Caco-2 (cell line): ENCODE measurements at regions of chr6 and their contacts with region 1.

Region 1: GRCh38 chr6:47631269-47631772 is 67.1 kb upstream of the ADGRF4 start:
- DNase-seq: peak in 1 of 2 experiments; percentile 53
- H3K4me3 ChIP-seq: no peak overlapping the region
- H3K4me3 Mint-ChIP-seq: no peak overlapping the region
- H3K27ac Mint-ChIP-seq: peak overlapping the region; percentile 84
- H3K4me1 ChIP-seq: peaks cover 42% of the 10 kb centered on the region
- H3K4me1 Mint-ChIP-seq: peaks cover 27% of the 10 kb centered on the region
- H3K27me3 ChIP-seq: no peaks in the 10 kb centered on the region
- H3K27me3 Mint-ChIP-seq: no peaks in the 10 kb centered on the region
- CTCF ChIP-seq: peak; percentile 46 to 68

Region 2: GRCh38 chr6:47646567-47647088 is 15.3 kb after region 1 on chr6:
- CTCF ChIA-PET with region 1: no interaction called
- POLR2A ChIA-PET with region 1: no interaction called
- intact Hi-C with region 1: loop called (anchors 2 kb)
- DNase-seq: no peak
- H3K4me3 ChIP-seq: no peak overlapping the region
- H3K4me3 Mint-ChIP-seq: no peak overlapping the region
- H3K27ac Mint-ChIP-seq: no peak overlapping the region
- H3K4me1 ChIP-seq: peaks cover 26% of the 10 kb centered on the region
- H3K4me1 Mint-ChIP-seq: peaks cover 15% of the 10 kb centered on the region
- H3K27me3 ChIP-seq: no peaks in the 10 kb centered on the region
- H3K27me3 Mint-ChIP-seq: no peaks in the 10 kb centered on the region
- CTCF ChIP-seq: peak in 1 of 2 experiments; percentile 8

Region 3: GRCh38 chr6:47680051-47680450 is 48.7 kb after region 1 on chr6:
- CTCF ChIA-PET with region 1: no interaction called
- POLR2A ChIA-PET with region 1: no interaction called
- intact Hi-C with region 1: no loop called
- DNase-seq: peak in 1 of 2 experiments; percentile 23
- H3K4me3 ChIP-seq: no peak overlapping the region
- H3K4me3 Mint-ChIP-seq: no peak overlapping the region
- H3K27ac Mint-ChIP-seq: no peak overlapping the region
- H3K4me1 ChIP-seq: no peaks in the 10 kb centered on the region
- H3K4me1 Mint-ChIP-seq: peaks cover 7% of the 10 kb centered on the region
- H3K27me3 ChIP-seq: no peaks in the 10 kb centered on the region
- H3K27me3 Mint-ChIP-seq: no peaks in the 10 kb centered on the region
- CTCF ChIP-seq: no peak

Region 4: GRCh38 chr6:47690209-47690608 is 58.9 kb after region 1 on chr6:
- CTCF ChIA-PET with region 1: no interaction called
- POLR2A ChIA-PET with region 1: no interaction called
- intact Hi-C with region 1: loop called (anchors 1 kb)
- DNase-seq: peak in 1 of 2 experiments; percentile 19
- H3K4me3 ChIP-seq: no peak overlapping the region
- H3K4me3 Mint-ChIP-seq: no peak overlapping the region
- H3K27ac Mint-ChIP-seq: no peak overlapping the region
- H3K4me1 ChIP-seq: no peaks in the 10 kb centered on the region
- H3K4me1 Mint-ChIP-seq: no peaks in the 10 kb centered on the region
- H3K27me3 ChIP-seq: no peaks in the 10 kb centered on the region
- H3K27me3 Mint-ChIP-seq: no peaks in the 10 kb centered on the region
- CTCF ChIP-seq: no peak

Region 5: DNA sequence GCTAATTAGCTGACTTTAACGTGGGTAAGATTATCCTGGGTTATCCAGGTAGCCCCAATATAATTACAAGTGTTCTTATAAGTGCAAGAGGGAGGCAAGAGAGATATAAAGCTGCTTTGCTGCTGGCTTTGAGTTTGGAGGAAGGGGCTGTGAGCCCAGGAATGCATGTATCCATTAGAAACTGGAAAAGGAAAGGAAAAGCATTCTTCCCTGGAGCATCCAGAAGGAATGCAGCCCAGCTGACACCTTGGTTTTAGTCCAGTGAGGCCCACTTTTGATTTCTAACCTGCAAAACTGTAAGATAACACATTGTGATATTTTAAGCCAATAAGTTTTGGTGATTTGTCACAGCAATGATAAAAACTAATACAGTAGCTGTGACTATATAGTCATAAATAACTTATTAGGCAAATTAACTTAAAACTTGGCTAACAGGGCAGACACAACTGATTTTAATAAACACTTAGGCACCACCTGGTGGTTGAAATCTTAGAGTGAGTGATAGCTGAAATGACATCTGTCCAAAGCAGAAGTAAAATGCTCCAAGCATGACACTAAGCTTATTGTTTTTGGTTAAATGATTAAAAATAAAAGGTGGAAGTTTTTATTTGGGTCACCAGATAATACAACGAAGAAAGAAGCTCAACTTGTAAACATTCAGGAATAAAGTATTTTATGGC is 102.7 kb after region 1 on chr6:
- CTCF ChIA-PET with region 1: interaction called, 47 read pairs
- POLR2A ChIA-PET with region 1: no interaction called
- intact Hi-C with region 1: loop called (anchors 1 kb)
- DNase-seq: peak in 1 of 2 experiments; percentile 54
- H3K4me3 ChIP-seq: no peak overlapping the region
- H3K4me3 Mint-ChIP-seq: no peak overlapping the region
- H3K27ac Mint-ChIP-seq: no peak overlapping the region
- H3K4me1 ChIP-seq: no peaks in the 10 kb centered on the region
- H3K4me1 Mint-ChIP-seq: no peaks in the 10 kb centered on the region
- H3K27me3 ChIP-seq: no peaks in the 10 kb centered on the region
- H3K27me3 Mint-ChIP-seq: no peaks in the 10 kb centered on the region
- CTCF ChIP-seq: peak; percentile 46 to 56

Region 6: DNA sequence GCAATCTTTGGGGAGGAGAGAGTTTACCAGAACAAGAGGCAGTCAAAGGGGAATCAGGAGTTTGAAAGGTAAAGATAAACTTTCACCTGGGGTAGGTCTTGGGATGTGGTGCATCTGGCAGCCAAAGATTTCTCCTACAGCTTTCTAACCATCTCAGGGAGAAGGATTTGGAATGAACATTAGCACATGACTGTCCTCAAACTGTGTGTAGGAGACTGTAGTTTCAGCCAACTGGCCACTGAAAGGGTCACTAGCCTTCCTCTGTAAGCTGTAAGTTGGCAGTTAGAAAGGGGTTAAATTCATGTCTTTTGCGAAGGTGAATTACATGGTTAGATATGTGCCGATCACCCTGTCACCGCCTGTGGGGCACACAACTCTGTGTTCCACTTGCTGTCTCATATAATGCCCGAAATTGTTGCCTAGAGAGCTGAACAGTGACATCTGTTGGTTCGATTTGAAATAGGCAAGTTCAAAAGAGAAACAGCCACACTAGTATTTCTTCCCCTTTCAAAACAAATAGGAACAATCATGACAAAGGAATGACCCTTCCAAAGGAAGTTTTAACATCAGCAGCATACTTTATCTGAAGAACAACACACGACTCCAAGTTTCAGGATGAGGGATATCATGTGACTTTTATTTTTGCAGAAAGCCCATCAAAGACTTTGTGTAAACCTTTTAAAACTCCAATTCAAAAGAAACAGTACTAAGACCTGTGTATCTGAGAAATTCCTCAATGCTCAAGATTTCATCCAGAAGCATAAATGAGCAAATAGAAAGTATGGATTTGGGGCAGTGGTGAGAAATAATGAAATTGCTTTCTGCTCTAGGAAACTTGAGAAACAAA is 149.4 kb after region 1 on chr6:
- CTCF ChIA-PET with region 1: interaction called, 16 read pairs
- POLR2A ChIA-PET with region 1: no interaction called
- intact Hi-C with region 1: loop called (anchors 1 kb)
- DNase-seq: peak in 1 of 2 experiments; percentile 55
- H3K4me3 ChIP-seq: no peak overlapping the region
- H3K4me3 Mint-ChIP-seq: peak overlapping the region; percentile 31
- H3K27ac Mint-ChIP-seq: no peak overlapping the region
- H3K4me1 ChIP-seq: no peaks in the 10 kb centered on the region
- H3K4me1 Mint-ChIP-seq: no peaks in the 10 kb centered on the region
- H3K27me3 ChIP-seq: no peaks in the 10 kb centered on the region; the same call in 1 of the 2 replicates
- H3K27me3 Mint-ChIP-seq: peaks cover 3% of the 10 kb centered on the region
- CTCF ChIP-seq: peak; percentile 34 to 64

Region 7: GRCh38 chr6:47852727-47853126 is 221.4 kb after region 1 on chr6:
- CTCF ChIA-PET with region 1: no interaction called
- POLR2A ChIA-PET with region 1: no interaction called
- intact Hi-C with region 1: no loop called
- DNase-seq: no peak
- H3K4me3 ChIP-seq: no peak overlapping the region
- H3K4me3 Mint-ChIP-seq: no peak overlapping the region
- H3K27ac Mint-ChIP-seq: no peak overlapping the region
- H3K4me1 ChIP-seq: no peaks in the 10 kb centered on the region
- H3K4me1 Mint-ChIP-seq: no peaks in the 10 kb centered on the region
- H3K27me3 ChIP-seq: no peaks in the 10 kb centered on the region
- H3K27me3 Mint-ChIP-seq: peaks cover 15% of the 10 kb centered on the region
- CTCF ChIP-seq: no peak

Region 8: GRCh38 chr6:47890326-47890875 is 259.1 kb after region 1 on chr6:
- CTCF ChIA-PET with region 1: no interaction called
- POLR2A ChIA-PET with region 1: no interaction called
- intact Hi-C with region 1: no loop called
- DNase-seq: no peak
- H3K4me3 ChIP-seq: no peak overlapping the region
- H3K4me3 Mint-ChIP-seq: no peak overlapping the region
- H3K27ac Mint-ChIP-seq: no peak overlapping the region
- H3K4me1 ChIP-seq: no peaks in the 10 kb centered on the region
- H3K4me1 Mint-ChIP-seq: no peaks in the 10 kb centered on the region
- H3K27me3 ChIP-seq: no peaks in the 10 kb centered on the region
- H3K27me3 Mint-ChIP-seq: no peaks in the 10 kb centered on the region
- CTCF ChIP-seq: no peak